ENCODE measurements at regions of chr4 and their contacts with region 1.

Region 1: DNA sequence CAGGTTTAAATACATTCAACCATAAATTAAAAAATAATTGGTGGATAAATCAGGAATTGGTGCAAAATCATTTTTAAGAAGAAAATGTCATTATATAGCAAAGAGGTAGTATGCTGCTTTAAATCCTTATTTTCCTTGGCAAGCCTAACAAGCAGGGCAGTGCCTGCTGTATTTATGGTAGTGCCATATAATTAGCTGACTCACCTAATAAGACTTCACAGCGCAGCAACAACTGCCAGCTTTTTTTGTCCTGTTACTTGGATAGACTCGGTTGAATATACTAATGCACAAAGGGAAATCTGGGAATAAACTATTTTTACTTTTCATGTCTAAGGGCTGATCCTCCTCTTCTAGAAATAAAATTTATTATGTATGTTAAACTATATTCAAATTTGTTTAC is 99.1 kb downstream of the SNCA start:
- DNase-seq: no peak
- H3K4me3 ChIP-seq: no peak overlapping the region
- H3K27ac ChIP-seq: no peak overlapping the region
- H3K4me1 ChIP-seq: no peaks in the 10 kb centered on the region
- H3K27me3 ChIP-seq: no peaks in the 10 kb centered on the region
- CTCF ChIP-seq: no peak
- EP300 ChIP-seq: no peak
- POLR2A ChIP-seq: no peak

Region 2: GRCh38 chr4:87856816-87857215 is 1881.1 kb before region 1 on chr4:
- in situ Hi-C with region 1: no loop called
- intact Hi-C with region 1: loop called (anchors 5 kb)
- DNase-seq: no peak
- H3K4me3 ChIP-seq: no peak overlapping the region
- H3K27ac ChIP-seq: no peak overlapping the region
- H3K4me1 ChIP-seq: no peaks in the 10 kb centered on the region
- H3K27me3 ChIP-seq: no peaks in the 10 kb centered on the region
- CTCF ChIP-seq: no peak
- EP300 ChIP-seq: no peak
- POLR2A ChIP-seq: no peak

Region 3: DNA sequence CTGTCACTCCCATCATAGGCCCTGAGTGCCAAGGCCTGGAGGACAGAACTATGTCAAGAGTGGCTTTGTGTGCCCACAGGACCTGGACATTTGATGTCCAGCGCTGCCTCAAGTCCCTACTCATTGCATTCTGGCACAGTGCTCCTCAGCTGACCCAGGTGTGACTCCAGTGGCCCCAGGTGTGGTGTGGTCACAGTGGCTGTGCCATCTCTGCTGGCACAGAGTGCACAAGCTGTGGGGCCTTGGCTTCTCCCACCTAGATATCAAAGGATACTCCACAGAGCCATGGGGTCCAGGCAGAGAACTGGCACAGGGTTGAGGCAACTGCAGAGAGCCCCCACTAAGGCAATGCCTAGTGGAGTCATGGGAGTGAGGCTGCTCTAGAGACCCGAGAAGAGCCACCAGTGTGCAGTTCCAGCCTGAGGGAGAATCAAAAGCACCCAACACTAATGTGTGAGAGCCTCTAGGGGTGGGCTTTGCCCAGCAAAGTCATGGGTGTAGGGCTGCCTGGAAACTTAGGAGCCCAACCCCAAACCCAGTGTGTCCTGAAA is 1240.0 kb before region 1 on chr4:
- in situ Hi-C with region 1: no loop called
- intact Hi-C with region 1: no loop called
- DNase-seq: no peak
- H3K4me3 ChIP-seq: no peak overlapping the region
- H3K27ac ChIP-seq: no peak overlapping the region
- H3K4me1 ChIP-seq: no peaks in the 10 kb centered on the region
- H3K27me3 ChIP-seq: no peaks in the 10 kb centered on the region
- CTCF ChIP-seq: no peak
- EP300 ChIP-seq: no peak
- POLR2A ChIP-seq: no peak

Region 4: GRCh38 chr4:89294573-89295269 is 443.2 kb before region 1 on chr4:
- in situ Hi-C with region 1: no loop called
- intact Hi-C with region 1: no loop called
- DNase-seq: no peak
- H3K4me3 ChIP-seq: no peak overlapping the region
- H3K27ac ChIP-seq: peak overlapping the region; percentile 81 to 88 (median 85)
- H3K4me1 ChIP-seq: peaks cover 0 to 73% (median 31%) of the 10 kb centered on the region in 4 donors
- H3K27me3 ChIP-seq: no peaks in the 10 kb centered on the region
- CTCF ChIP-seq: no peak
- EP300 ChIP-seq: no peak
- POLR2A ChIP-seq: no peak

Region 5: DNA sequence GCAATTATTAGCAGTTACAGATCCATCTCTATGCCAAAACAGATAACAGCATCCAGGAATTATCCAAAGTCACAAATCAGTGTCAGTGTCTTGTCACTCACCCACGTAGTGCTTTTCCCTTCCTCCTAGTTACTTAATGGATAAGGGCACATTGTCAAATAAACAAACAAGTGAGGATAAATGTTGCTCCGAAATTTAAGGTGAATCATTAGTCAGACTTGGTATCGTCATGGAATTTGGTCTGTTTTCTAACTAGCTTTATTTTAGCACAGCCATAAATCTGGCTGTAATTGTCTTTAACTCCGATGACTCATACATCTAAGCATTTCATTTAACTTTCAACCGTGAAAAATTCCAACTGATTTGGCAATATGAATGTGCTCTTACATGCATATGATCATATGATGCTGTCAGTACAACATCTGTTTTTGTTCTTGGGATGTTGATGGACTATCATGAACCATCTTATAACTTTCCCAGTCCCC is 15.7 kb after region 1 on chr4:
- in situ Hi-C with region 1: no loop called
- intact Hi-C with region 1: loop called (anchors 1 kb)
- DNase-seq: no peak
- H3K4me3 ChIP-seq: no peak overlapping the region
- H3K27ac ChIP-seq: peak overlapping the region; percentile 1 to 56 (median 31)
- H3K4me1 ChIP-seq: peaks cover 0 to 10% (median 0%) of the 10 kb centered on the region in 4 donors
- H3K27me3 ChIP-seq: no peaks in the 10 kb centered on the region
- CTCF ChIP-seq: no peak
- EP300 ChIP-seq: no peak
- POLR2A ChIP-seq: no peak